Heart right ventricle (tissue), 16 donors: ENCODE measurements at regions of chr10 and their contacts with region 1.

Region 1: DNA sequence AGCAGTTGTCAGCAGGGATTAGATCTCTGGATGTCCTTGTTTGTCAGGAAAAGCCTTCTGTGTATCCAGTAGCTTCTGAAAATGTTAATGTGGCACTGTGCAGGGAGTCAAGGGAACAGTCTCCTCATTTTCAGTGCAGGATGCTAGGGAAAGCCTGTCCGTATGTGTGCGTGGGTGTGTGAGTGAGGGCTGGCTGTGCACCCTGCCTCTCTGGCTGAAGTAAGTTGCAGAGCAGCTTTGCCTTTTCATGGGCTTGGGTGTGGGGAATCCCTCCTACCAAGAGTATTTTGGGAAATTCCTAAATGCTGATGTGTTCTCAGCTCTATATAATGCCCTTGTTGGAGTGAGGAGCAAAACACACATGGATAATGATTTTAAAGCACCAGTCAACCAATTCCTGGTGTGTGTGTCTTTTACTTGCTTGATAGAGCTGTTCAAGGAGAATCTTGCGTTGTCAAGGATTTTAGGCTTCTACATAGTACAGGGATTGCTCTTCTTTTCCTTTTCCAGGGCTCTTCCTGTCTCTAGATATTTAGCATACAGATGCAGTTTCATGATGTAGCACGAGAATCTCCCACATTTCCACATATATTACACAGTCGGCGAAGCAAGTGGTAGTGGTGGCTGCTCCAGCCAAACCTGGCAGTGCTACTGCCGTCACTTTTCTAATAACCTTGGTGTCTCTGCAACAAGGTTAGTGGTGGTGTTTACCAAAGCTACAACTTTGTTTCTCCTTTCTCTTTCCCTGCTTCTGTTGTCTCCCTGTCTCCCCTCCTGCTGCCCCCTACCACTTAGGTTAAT is 92.8 kb downstream of the MCU start:
- DNase-seq: peak; percentile 37 to 89
- ATAC-seq: peak; percentile 71 to 93 (median 90)
- H3K4me3 ChIP-seq: peak overlapping the region in 1 of 10 donors; percentile 8
- H3K27ac ChIP-seq: peak overlapping the region in 3 of 10 donors; percentile 18 to 32 (median 26)
- H3K4me1 ChIP-seq: peaks cover 8 to 36% (median 26%) of the 10 kb centered on the region in 9 donors
- H3K27me3 ChIP-seq: no peaks in the 10 kb centered on the region
- CTCF ChIP-seq: no peak

Region 2: DNA sequence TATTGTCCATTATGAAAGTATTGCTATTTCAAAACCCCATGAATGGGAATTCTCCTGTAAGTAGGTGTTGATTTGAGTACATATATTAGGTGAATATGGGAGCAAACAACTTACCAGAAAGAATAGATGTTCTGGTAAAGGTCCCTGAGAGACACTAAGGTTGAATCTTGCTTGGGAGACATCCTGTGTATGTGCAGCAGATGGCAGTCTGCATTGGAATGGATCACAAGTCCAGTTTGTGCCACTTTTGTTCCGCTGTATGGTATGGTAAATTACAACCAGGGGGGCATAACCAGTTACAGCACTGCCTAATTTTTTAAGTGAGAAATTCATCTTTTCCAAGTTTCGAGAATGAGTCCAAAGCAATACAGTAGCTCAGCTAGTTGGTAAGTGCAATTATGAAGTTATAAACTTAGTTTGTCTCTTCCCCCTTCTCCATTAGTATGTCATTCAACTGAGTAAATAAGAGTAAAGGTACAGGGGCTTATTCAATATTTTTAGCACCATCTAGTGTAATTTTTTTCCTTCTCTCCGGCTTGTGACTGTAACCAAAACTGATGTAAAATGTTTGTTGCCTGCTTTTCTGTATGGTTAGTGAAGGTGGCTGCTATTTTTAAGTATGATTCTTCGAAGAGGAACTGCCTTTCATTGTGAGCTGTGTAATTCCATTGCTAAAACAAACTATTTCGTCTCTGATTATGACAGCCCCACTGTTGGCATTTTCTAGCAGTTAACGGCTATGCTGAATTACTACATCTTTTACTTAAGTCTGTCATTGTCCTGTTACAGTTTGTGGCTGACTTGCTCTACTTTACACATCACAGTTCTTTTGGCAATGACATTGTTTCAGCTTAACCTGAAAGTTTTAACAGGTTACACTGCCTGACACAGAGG is 90.0 kb before region 1 on chr10:
- intact Hi-C with region 1: no loop called
- DNase-seq: peak in 1 of 2 donors; percentile 32
- ATAC-seq: peak in 4 of 8 donors; percentile 43 to 61 (median 50)
- H3K4me3 ChIP-seq: peak overlapping the region in 3 of 10 donors; percentile 1 to 13 (median 2)
- H3K27ac ChIP-seq: no peak overlapping the region
- H3K4me1 ChIP-seq: peaks cover 0 to 39% (median 27%) of the 10 kb centered on the region in 9 donors
- H3K27me3 ChIP-seq: no peaks in the 10 kb centered on the region
- CTCF ChIP-seq: peak; percentile 12 to 77 (median 54)

Region 3: GRCh38 chr10:72746426-72747363 is 38.1 kb before region 1 on chr10:
- intact Hi-C with region 1: loop called in 1 of 10 experiments (anchors 5 kb)
- DNase-seq: no peak
- ATAC-seq: no peak
- H3K4me3 ChIP-seq: no peak overlapping the region
- H3K27ac ChIP-seq: no peak overlapping the region
- H3K4me1 ChIP-seq: peaks cover 0 to 34% (median 8%) of the 10 kb centered on the region in 9 donors
- H3K27me3 ChIP-seq: no peaks in the 10 kb centered on the region
- CTCF ChIP-seq: no peak